Activated T-helper 1 cell treated with anti-CD3 and anti-CD28 coated beads, Interleukin-12 subunit alpha, Interleukin-12 subunit beta, Interleukin-2, Interleukin-4 antibody, amounts not matched to agents 30 ng/mL and 10 ng/mL and 1 ng/mL, durations not matched to agents 14 hours and 24 hours and 36 hours (primary cell): ENCODE measurements at regions of chr7 and their contacts with region 1.

Region 1: GRCh38 chr7:96075510-96076349 is 246.2 kb downstream of the SLC25A13 start:
- DNase-seq: peak; percentile 14
- H3K4me3 Mint-ChIP-seq: peak overlapping the region; percentile 80
- H3K27ac Mint-ChIP-seq: no peak overlapping the region
- H3K4me1 Mint-ChIP-seq: peaks cover 9% of the 10 kb centered on the region
- H3K27me3 Mint-ChIP-seq: peaks cover 53% of the 10 kb centered on the region

Region 2: DNA sequence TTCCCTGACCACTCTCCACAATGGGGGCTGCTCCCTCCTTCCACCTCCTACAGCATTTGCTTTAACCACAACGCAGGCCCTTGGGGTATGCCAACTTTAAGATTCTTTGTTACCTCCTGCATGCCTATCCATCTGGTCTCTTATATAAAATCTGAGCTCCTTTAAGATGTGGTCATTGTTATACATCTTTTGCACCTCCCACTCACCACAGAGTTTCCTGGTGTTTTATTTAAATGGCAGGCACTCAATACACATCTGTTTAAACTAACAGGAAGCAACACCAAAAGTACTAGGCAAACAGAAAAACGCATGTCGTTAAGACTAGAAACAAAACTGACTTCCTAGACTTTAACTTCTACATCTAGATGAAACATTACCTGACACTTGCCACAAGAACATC is 209.8 kb after region 1 on chr7:
- intact Hi-C with region 1: loop called (anchors 10 kb)
- DNase-seq: peak; percentile 50
- H3K4me3 Mint-ChIP-seq: peak overlapping the region; percentile 66
- H3K27ac Mint-ChIP-seq: peak overlapping the region; percentile 93
- H3K4me1 Mint-ChIP-seq: peaks cover 51% of the 10 kb centered on the region
- H3K27me3 Mint-ChIP-seq: no peaks in the 10 kb centered on the region

Region 3: DNA sequence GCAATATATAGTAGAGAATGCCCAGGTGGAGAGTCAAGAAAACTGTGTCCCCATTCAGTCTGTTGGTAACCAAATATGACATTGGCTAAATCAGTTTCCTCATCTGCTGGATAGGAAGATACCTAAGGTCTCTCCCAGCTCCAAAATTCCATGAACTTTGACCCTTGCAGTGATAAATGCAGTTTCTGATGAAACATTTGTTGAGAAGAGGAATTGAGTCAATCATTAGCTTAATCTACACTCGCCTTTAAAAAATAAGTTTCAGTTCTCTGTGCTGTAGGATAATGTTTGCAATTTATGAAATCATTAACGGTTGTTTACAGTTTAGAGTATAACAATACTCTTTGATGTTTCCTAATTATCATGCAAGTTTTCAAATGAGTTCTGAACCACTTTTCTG is 284.1 kb after region 1 on chr7:
- intact Hi-C with region 1: loop called (anchors 10 kb)
- DNase-seq: no peak
- H3K4me3 Mint-ChIP-seq: no peak overlapping the region
- H3K27ac Mint-ChIP-seq: no peak overlapping the region
- H3K4me1 Mint-ChIP-seq: no peaks in the 10 kb centered on the region
- H3K27me3 Mint-ChIP-seq: no peaks in the 10 kb centered on the region

Region 4: GRCh38 chr7:96414931-96415292 is 339.2 kb after region 1 on chr7:
- intact Hi-C with region 1: loop called (anchors 1 kb)
- DNase-seq: peak; percentile 30
- H3K4me3 Mint-ChIP-seq: no peak overlapping the region
- H3K27ac Mint-ChIP-seq: no peak overlapping the region
- H3K4me1 Mint-ChIP-seq: no peaks in the 10 kb centered on the region
- H3K27me3 Mint-ChIP-seq: peaks cover 10% of the 10 kb centered on the region